PC-9 (cell line): ENCODE measurements at regions of chr2 and their contacts with region 1.

Region 1: DNA sequence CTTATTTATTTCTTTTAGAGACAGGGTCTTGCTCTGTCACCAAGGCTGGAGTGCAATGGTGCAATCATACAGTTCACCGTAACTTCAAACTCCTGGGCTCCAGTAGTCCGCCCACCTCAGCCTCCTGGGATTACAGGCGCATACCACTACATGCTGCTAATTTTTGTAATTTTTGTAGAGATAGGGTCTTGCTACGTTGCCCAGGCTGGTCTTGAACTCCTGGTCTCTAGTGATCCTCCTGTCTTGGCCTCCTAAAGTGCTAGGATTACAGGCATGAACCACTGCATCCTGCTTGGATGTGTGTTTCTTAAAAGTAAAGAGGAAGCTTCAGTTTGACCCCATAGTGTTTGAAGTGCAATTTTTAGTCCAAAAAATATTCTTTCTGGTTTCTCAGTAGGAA is 105.0 kb upstream of the KIF5C start:
- DNase-seq: no peak
- H3K4me3 ChIP-seq: no peak overlapping the region
- H3K27ac ChIP-seq: no peak overlapping the region
- H3K4me1 ChIP-seq: no peaks in the 10 kb centered on the region
- H3K27me3 ChIP-seq: no peaks in the 10 kb centered on the region
- CTCF ChIP-seq: no peak

Region 2: DNA sequence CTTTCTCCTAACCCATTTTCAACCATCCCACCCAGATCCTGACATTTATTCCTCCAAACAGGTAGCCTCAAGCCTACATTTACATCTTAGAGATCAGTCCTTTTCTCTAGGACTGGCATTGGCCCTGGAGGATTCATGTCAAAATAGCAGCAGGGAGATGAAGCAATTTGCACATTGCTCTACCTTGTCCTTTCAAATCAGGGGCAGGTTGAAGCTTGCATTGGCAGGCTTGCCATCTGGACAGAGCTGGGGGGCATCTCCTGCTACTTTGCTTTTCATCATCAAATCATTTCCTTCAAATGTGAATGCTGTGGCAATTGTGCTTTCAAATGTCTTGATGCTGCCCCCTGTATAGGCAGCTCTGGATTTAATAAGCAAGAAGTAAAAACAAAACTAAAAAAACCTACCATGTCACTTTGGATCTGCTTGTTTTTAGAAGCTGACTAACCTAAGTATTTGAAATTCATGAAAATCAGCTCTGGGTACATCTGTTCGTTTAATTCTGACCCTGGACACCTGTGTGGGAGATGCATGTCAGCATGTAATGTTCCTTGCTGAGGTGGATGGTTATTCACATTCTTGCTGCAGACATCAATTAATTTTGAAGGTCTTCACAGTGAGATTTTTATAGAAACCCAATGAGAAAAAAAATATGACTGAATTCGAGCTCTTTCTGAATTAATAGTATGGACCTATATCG is 152.9 kb after region 1 on chr2:
- CTCF ChIA-PET with region 1: no interaction called
- POLR2A ChIA-PET with region 1: interaction called, 12 read pairs
- intact Hi-C with region 1: no loop called
- DNase-seq: no peak
- H3K4me3 ChIP-seq: no peak overlapping the region
- H3K27ac ChIP-seq: no peak overlapping the region
- H3K4me1 ChIP-seq: no peaks in the 10 kb centered on the region
- H3K27me3 ChIP-seq: no peaks in the 10 kb centered on the region
- CTCF ChIP-seq: no peak